Naive thymus-derived CD4-positive, alpha-beta T cell (primary cell): ENCODE measurements at regions of chr3 and their contacts with region 1.

Region 1: DNA sequence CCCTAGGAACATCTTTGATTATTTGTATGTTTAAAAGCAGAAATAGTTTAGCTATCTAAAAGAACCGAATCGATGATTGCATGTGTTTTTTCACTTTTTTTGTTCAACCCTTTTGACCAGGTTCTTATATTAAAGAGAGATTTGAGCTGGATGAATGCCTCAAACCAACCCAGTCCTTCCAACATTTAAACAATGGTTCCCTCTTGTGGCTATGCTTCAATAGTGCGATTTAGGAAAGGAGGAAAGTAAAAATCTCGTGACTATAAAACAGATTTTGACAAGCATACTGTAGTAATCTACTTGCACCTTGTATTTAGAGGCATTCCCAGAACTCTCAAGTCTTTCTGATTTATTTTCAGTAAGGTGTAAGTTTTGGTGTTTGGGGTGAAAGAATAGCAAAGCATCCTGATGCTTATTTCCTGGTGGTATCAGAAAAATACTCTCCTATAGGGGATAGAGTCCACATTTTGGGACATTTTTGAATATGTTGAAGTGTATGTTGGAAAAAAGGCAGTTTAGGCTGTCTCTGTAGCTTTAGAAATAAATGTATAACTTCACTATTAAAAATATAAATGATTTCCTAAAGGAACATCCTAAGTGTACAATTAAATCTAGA is 159.6 kb upstream of the KCNH8 start:
- DNase-seq: peak in 7 of 9 donors; percentile 32 to 69 (median 51)
- ATAC-seq: peak; percentile 72
- H3K4me3 ChIP-seq: no peak overlapping the region
- H3K4me3 Mint-ChIP-seq: peak overlapping the region in 9 of 10 donors; percentile 65 to 91 (median 77)
- H3K27ac ChIP-seq: no peak overlapping the region
- H3K27ac Mint-ChIP-seq: peak overlapping the region in 6 of 9 donors; percentile 21 to 71 (median 50)
- H3K4me1 ChIP-seq: peaks cover 0 to 7% of the 10 kb centered on the region in 2 donors
- H3K4me1 Mint-ChIP-seq: peaks cover 2 to 31% (median 24%) of the 10 kb centered on the region in 7 donors
- H3K27me3 ChIP-seq: no peaks in the 10 kb centered on the region
- H3K27me3 Mint-ChIP-seq: peaks cover 20 to 31% (median 22%) of the 10 kb centered on the region in 5 donors

Region 2: GRCh38 chr3:17412950-17413530 is 1575.7 kb before region 1 on chr3:
- CTCF ChIA-PET with region 1: interaction called, 4 read pairs
- POLR2A ChIA-PET with region 1: no interaction called
- intact Hi-C with region 1: loop called in 1 of 2 experiments (anchors 1 kb)
- DNase-seq: peak in 6 of 9 donors; percentile 21 to 53 (median 41)
- ATAC-seq: peak; percentile 69
- H3K4me3 ChIP-seq: no peak overlapping the region
- H3K4me3 Mint-ChIP-seq: no peak overlapping the region
- H3K27ac ChIP-seq: no peak overlapping the region
- H3K27ac Mint-ChIP-seq: peak overlapping the region in 1 of 9 donors; percentile 51
- H3K4me1 ChIP-seq: no peaks in the 10 kb centered on the region
- H3K4me1 Mint-ChIP-seq: no peaks in the 10 kb centered on the region
- H3K27me3 ChIP-seq: no peaks in the 10 kb centered on the region
- H3K27me3 Mint-ChIP-seq: no peaks in the 10 kb centered on the region

Region 3: DNA sequence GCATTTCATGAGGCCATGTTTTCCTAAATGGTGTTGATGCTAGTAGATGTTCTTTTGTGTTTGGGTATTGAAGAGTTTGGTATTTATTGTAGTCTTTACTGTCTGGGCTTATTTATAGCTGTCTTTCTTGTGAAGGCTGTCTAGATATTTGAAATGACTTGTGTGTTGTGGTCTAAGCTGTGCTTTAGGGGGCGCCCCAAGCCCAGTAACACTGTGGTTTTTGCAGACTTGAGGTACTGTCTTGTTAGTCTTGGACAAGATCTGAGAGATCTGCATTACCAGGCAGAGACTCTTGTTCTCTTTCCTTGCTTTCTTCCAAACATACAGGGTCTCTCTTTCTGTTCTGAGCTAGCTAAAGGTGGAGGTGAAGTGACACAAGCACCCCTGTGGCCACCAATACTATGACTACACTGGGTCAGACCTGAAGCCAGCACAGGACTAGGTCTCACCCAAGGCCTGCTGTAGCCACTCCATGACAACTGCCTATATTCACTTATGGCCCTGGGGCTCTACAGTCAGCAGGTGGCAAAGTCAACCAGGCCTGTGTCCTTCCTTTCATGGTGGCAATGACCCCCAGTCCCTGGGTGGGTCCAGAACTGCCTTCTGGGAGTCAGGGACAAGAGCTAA is 1094.2 kb before region 1 on chr3:
- CTCF ChIA-PET with region 1: interaction called, 14 read pairs
- POLR2A ChIA-PET with region 1: no interaction called
- intact Hi-C with region 1: loop called (anchors 1 kb)
- DNase-seq: peak in 7 of 9 donors; percentile 21 to 48 (median 33)
- ATAC-seq: peak; percentile 48
- H3K4me3 ChIP-seq: no peak overlapping the region
- H3K4me3 Mint-ChIP-seq: no peak overlapping the region
- H3K27ac ChIP-seq: no peak overlapping the region
- H3K27ac Mint-ChIP-seq: no peak overlapping the region
- H3K4me1 ChIP-seq: no peaks in the 10 kb centered on the region
- H3K4me1 Mint-ChIP-seq: peaks cover 0 to 1% (median 0%) of the 10 kb centered on the region in 7 donors
- H3K27me3 ChIP-seq: no peaks in the 10 kb centered on the region
- H3K27me3 Mint-ChIP-seq: peaks cover 0 to 3% (median 0%) of the 10 kb centered on the region in 5 donors

Region 4: DNA sequence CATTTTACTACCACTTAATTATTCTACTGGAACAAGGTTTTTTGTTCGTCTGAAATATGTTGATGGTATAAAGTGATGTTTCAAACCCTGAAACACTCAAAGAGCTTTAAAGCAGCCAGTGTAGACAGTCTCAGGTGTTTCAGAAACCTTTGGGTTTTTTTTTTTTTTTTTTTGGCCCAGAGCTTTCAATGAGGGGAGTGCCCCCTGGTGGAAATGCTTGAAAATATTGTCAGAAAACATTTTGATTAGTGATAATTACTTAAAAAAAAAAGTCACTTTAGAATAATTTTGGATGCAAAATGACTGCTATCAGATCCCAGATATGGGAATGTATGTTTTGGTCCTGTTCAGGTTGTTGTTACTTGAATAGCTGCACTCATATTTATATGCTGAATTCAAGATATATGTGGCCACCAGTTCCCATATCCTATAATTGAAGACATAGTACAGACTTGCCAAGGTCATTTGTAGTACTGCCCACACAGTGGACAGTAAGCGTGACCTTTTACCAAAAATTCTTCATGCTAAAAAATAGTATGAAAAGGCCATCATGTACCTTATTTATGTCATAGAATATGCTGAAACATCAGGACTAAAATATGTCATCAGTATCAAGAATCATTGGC is 599.5 kb before region 1 on chr3:
- CTCF ChIA-PET with region 1: no interaction called
- POLR2A ChIA-PET with region 1: no interaction called
- intact Hi-C with region 1: loop called in 1 of 2 experiments (anchors 2 kb)
- DNase-seq: peak in 7 of 9 donors; percentile 32 to 63 (median 53)
- ATAC-seq: peak; percentile 71
- H3K4me3 ChIP-seq: no peak overlapping the region
- H3K4me3 Mint-ChIP-seq: peak overlapping the region in 8 of 10 donors; percentile 4 to 58 (median 28)
- H3K27ac ChIP-seq: peak overlapping the region; percentile 17
- H3K27ac Mint-ChIP-seq: peak overlapping the region in 7 of 9 donors; percentile 2 to 79 (median 47)
- H3K4me1 ChIP-seq: peaks cover 0 to 41% of the 10 kb centered on the region in 2 donors
- H3K4me1 Mint-ChIP-seq: peaks cover 21 to 95% (median 88%) of the 10 kb centered on the region in 7 donors
- H3K27me3 ChIP-seq: no peaks in the 10 kb centered on the region
- H3K27me3 Mint-ChIP-seq: no peaks in the 10 kb centered on the region

Region 5: DNA sequence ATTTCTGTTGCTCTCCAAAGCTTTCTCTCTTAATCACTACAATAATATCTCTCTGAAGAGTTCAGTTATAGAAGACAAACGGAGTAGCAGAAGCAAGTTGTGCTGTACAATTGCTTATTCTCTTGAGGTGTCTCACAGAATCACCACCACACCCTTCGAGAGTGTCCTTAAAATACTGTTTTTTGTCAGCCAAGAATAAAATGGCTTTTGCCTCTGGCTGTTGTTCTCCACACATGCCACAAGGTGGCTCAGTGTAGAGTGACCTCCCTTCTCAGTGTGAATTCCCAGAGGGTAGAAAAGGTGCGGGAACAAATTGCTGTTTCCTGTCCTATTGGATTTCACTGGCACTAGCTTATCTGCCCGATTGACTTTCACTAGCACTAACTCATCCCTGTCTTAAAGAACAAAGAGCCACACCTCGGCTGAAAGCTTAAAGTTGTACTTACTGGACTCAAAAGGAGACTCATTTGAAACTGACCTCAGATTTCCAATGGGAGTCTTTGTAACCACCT is 429.3 kb before region 1 on chr3:
- CTCF ChIA-PET with region 1: no interaction called
- POLR2A ChIA-PET with region 1: no interaction called
- intact Hi-C with region 1: loop called (anchors 1 to 2 kb)
- DNase-seq: peak; percentile 9 to 57 (median 32)
- ATAC-seq: peak; percentile 77
- H3K4me3 ChIP-seq: no peak overlapping the region
- H3K4me3 Mint-ChIP-seq: peak overlapping the region; percentile 40 to 79 (median 67)
- H3K27ac ChIP-seq: no peak overlapping the region
- H3K27ac Mint-ChIP-seq: peak overlapping the region; percentile 63 to 89 (median 79)
- H3K4me1 ChIP-seq: peaks cover 13 to 19% of the 10 kb centered on the region in 2 donors
- H3K4me1 Mint-ChIP-seq: peaks cover 22 to 67% (median 61%) of the 10 kb centered on the region in 7 donors
- H3K27me3 ChIP-seq: no peaks in the 10 kb centered on the region
- H3K27me3 Mint-ChIP-seq: no peaks in the 10 kb centered on the region

Region 6: GRCh38 chr3:18657858-18658820 is 330.6 kb before region 1 on chr3:
- CTCF ChIA-PET with region 1: no interaction called
- POLR2A ChIA-PET with region 1: no interaction called
- intact Hi-C with region 1: no loop called
- DNase-seq: peak in 4 of 9 donors; percentile 14 to 35 (median 26)
- ATAC-seq: peak; percentile 56
- H3K4me3 ChIP-seq: no peak overlapping the region
- H3K4me3 Mint-ChIP-seq: peak overlapping the region in 9 of 10 donors; percentile 7 to 53 (median 30)
- H3K27ac ChIP-seq: no peak overlapping the region
- H3K27ac Mint-ChIP-seq: peak overlapping the region in 8 of 9 donors; percentile 1 to 74 (median 34)
- H3K4me1 ChIP-seq: peaks cover 6 to 21% of the 10 kb centered on the region in 2 donors
- H3K4me1 Mint-ChIP-seq: peaks cover 24 to 66% (median 39%) of the 10 kb centered on the region in 7 donors
- H3K27me3 ChIP-seq: no peaks in the 10 kb centered on the region
- H3K27me3 Mint-ChIP-seq: no peaks in the 10 kb centered on the region

Region 7: DNA sequence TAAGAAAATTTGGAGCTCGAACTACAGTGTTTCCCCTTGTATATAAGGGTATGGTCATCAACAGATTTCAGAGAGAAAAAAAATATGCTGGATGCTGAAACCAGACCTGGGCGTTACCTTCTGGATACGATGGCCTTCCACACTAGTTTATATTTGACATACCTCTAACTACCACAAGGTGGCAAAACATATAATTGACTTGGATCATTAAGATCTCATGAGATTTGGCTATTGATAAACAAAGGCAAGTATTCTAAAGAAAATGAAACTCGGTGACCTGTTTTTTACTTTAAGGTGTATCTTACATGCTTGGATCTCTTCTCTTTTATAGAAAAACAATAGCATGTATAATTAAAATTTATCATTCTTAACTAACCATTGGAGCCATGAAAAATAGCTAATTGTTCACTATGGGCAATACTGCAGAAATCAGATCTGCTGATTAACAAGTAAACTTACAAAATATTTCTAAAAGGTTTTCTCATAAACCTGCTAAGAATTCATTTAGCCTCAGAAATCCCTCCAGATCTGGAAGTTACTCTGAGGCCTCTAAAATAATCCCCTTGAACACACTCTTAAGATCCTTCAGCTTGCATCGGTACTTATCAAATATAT is 141.0 kb before region 1 on chr3:
- CTCF ChIA-PET with region 1: no interaction called
- POLR2A ChIA-PET with region 1: no interaction called
- intact Hi-C with region 1: loop called (anchors 1 to 5 kb)
- DNase-seq: no peak
- ATAC-seq: no peak
- H3K4me3 ChIP-seq: no peak overlapping the region
- H3K4me3 Mint-ChIP-seq: no peak overlapping the region
- H3K27ac ChIP-seq: no peak overlapping the region
- H3K27ac Mint-ChIP-seq: no peak overlapping the region
- H3K4me1 ChIP-seq: no peaks in the 10 kb centered on the region
- H3K4me1 Mint-ChIP-seq: peaks cover 0 to 32% (median 18%) of the 10 kb centered on the region in 7 donors
- H3K27me3 ChIP-seq: peaks cover 0 to 3% of the 10 kb centered on the region in 2 donors
- H3K27me3 Mint-ChIP-seq: peaks cover 0 to 8% (median 0%) of the 10 kb centered on the region in 5 donors

Region 8: DNA sequence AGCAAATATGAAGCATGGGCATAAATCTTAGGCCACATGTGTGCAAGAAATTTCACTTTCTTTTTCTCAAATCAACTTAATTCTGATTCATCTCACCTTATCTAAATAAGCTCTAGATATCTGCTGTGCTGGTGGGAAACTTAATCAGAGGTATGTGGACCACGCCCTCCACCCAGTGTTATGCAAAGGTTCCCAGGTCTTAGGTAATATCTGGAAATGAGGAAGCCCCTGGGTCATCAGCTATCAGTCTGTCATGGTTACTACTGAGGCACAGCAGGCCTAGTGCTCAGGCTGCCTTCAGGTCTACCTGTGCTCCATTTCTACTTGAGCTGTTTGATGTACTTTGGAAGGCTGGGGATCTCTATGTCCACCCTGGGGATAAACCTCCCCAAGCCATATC is 25.2 kb after region 1 on chr3:
- CTCF ChIA-PET with region 1: no interaction called
- POLR2A ChIA-PET with region 1: no interaction called
- intact Hi-C with region 1: no loop called
- DNase-seq: no peak
- ATAC-seq: no peak
- H3K4me3 ChIP-seq: no peak overlapping the region
- H3K4me3 Mint-ChIP-seq: no peak overlapping the region
- H3K27ac ChIP-seq: no peak overlapping the region
- H3K27ac Mint-ChIP-seq: no peak overlapping the region
- H3K4me1 ChIP-seq: no peaks in the 10 kb centered on the region
- H3K4me1 Mint-ChIP-seq: peaks cover 0 to 6% (median 0%) of the 10 kb centered on the region in 7 donors
- H3K27me3 ChIP-seq: no peaks in the 10 kb centered on the region
- H3K27me3 Mint-ChIP-seq: peaks cover 0 to 4% (median 0%) of the 10 kb centered on the region in 5 donors